Activated T-helper 1 cell treated with anti-CD3 and anti-CD28 coated beads, Interleukin-12 subunit alpha, Interleukin-12 subunit beta, Interleukin-2, Interleukin-4 antibody, amounts not matched to agents 30 ng/mL and 10 ng/mL and 1 ng/mL, durations not matched to agents 14 hours and 24 hours and 36 hours (primary cell): ENCODE measurements at regions of chr6 and their contacts with region 1.

Region 1: GRCh38 chr6:111837641-111838500 is 35.4 kb downstream of the FYN start:
- DNase-seq: peak; percentile 60
- H3K4me3 Mint-ChIP-seq: peak overlapping the region; percentile 70
- H3K27ac Mint-ChIP-seq: peak overlapping the region; percentile 94
- H3K4me1 Mint-ChIP-seq: peaks cover 61% of the 10 kb centered on the region
- H3K27me3 Mint-ChIP-seq: no peaks in the 10 kb centered on the region

Region 2: DNA sequence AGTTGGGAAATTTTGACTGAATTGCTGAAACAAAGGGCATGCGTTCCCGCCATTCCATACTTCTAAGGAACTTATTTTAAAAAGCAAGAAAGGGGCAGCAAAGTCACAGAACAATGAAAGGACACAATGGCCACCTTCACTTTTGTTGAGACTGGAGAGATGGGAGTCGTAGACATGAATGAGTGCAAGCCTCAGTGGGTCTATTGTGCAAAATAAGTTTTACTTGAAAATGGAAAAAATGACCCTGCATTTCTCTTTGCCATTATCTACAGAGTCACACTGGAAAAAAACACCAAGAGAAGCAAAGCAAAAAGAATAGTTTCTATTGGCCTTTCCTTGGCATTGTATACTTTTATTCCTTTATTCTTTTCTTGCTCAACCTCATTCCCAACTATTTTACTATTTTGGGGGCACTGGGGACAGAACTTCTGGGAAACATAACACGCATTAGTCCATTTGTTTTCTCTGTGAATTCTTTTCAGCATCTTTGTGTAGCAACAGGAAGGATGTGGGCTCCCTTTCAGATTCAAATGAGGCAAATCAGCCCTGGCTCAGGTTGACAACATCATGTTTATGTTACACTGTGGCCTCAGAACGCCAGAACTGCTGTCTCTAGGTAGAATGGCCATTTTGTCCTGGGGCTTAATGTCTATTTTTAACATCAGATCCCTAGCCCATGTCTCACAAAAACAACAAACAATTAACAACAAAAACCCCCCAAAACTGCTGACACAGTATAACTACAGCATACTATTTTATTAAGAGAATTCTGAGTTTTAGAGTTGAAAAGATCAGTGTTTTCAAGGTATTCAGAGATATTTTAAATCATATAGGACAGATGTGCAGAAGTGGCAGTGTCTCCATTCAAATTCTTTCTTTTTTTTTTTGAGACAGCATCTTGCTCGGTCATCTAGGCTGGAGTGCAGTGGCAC is 86.9 kb before region 1 on chr6:
- intact Hi-C with region 1: loop called (anchors 1 kb)
- DNase-seq: peak; percentile 66
- H3K4me3 Mint-ChIP-seq: peak overlapping the region; percentile 70
- H3K27ac Mint-ChIP-seq: peak overlapping the region; percentile 97
- H3K4me1 Mint-ChIP-seq: peaks cover 95% of the 10 kb centered on the region
- H3K27me3 Mint-ChIP-seq: no peaks in the 10 kb centered on the region

Region 3: DNA sequence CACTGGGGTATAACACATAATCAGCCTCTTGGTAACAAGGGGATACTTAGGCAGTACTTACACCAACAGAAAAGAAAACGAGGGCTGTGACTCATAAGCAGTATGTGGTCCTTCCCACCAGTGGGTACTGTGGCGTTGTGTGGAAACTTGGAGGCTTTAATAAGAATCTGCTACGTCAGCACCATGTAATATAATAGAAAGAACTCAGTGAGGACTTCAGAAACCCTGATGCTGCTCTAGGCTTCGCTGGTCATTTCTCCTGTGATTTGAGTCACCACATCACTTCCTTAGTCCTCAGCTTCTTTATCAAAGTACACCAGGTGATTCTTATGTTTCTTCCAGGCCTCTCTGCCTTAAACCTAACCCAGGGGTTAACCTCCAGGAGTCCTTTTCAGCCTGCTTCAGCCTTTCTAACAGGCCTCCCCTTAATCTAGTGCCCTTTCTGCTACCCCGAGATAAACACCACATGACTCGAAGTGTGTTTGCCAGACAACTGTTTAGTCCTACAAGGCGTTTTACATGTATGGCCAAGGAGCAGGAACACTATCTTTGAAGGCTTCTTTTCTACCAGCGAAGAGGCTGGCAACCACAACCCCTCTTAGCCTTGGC is 33.1 kb before region 1 on chr6:
- intact Hi-C with region 1: loop called (anchors 1 kb)
- DNase-seq: peak; percentile 67
- H3K4me3 Mint-ChIP-seq: peak overlapping the region; percentile 74
- H3K27ac Mint-ChIP-seq: peak overlapping the region; percentile 98
- H3K4me1 Mint-ChIP-seq: peaks cover 84% of the 10 kb centered on the region
- H3K27me3 Mint-ChIP-seq: no peaks in the 10 kb centered on the region

Region 4: DNA sequence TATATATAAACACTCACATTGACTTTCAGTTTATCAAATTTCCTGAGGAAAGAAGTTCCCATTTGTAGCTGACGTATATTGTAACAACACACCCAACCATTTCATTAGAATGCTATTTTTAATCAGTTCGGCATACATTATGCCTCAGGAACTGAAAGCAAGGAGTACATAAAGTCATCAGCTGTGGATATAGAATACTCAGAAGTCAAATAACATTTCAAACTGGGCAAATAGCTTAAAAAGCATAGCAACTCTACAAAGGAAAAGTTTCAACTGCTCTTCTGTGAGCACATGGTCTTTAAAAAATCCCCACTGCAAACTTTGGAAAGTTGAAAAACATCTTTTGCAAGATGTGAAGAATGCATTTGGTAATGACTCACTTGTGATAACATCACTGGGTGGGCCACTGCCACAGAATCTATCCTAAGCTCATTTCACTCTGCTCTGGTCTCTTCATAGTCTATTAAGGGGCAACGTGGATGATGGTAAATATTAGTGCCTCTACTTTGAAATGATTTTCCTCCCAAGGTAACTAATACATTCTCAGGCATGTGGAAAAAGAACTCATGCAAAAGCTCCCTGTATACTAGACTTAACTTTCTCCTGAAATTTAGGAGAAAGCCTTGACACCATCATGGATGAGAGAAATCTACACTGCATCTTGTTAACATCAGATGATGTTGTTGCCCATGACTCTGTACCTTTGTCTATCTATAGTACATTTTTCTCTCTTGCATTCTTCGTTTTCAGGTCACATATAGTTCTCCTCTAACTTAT is 13.9 kb before region 1 on chr6:
- intact Hi-C with region 1: loop called (anchors 1 kb)
- DNase-seq: no peak
- H3K4me3 Mint-ChIP-seq: peak overlapping the region; percentile 72
- H3K27ac Mint-ChIP-seq: peak overlapping the region; percentile 89
- H3K4me1 Mint-ChIP-seq: peaks cover 81% of the 10 kb centered on the region
- H3K27me3 Mint-ChIP-seq: no peaks in the 10 kb centered on the region

Region 5: GRCh38 chr6:111854683-111855082 is 16.8 kb after region 1 on chr6:
- intact Hi-C with region 1: no loop called
- DNase-seq: no peak
- H3K4me3 Mint-ChIP-seq: no peak overlapping the region
- H3K27ac Mint-ChIP-seq: no peak overlapping the region
- H3K4me1 Mint-ChIP-seq: peaks cover 87% of the 10 kb centered on the region
- H3K27me3 Mint-ChIP-seq: no peaks in the 10 kb centered on the region

Region 6: DNA sequence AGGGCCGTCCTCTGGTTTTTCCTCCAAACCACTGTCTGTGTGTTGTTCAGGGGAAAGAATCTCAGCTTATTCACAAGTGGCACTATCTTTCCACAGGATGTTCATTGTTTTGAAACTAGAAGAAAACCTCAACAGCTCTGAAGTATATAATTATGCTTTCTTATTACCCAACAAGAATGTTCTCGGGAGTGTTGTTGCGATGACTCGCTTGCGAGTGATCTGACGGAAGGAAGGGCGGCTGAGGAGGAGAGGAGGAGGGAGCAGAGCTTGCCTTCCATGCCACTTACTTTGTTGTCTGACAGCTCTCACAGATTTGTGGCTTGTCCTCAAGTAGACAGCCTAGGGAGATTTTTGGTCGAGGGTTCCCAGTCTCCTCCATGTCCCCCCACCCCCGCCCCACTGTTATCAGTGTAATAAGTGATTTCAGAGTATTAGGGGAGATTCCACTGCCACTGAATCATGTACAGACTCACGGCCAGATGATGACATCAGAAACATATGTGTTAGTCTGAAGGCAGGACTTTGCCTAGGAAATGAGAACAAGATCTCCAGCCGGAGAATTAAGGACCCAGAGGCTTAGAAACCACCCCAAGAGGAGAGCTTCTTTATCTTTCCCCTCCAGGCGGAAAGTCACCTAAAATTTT is 135.4 kb after region 1 on chr6:
- intact Hi-C with region 1: loop called (anchors 2 kb)
- DNase-seq: peak; percentile 47
- H3K4me3 Mint-ChIP-seq: peak overlapping the region; percentile 53
- H3K27ac Mint-ChIP-seq: peak overlapping the region; percentile 87
- H3K4me1 Mint-ChIP-seq: peaks cover 55% of the 10 kb centered on the region
- H3K27me3 Mint-ChIP-seq: no peaks in the 10 kb centered on the region

Region 7: DNA sequence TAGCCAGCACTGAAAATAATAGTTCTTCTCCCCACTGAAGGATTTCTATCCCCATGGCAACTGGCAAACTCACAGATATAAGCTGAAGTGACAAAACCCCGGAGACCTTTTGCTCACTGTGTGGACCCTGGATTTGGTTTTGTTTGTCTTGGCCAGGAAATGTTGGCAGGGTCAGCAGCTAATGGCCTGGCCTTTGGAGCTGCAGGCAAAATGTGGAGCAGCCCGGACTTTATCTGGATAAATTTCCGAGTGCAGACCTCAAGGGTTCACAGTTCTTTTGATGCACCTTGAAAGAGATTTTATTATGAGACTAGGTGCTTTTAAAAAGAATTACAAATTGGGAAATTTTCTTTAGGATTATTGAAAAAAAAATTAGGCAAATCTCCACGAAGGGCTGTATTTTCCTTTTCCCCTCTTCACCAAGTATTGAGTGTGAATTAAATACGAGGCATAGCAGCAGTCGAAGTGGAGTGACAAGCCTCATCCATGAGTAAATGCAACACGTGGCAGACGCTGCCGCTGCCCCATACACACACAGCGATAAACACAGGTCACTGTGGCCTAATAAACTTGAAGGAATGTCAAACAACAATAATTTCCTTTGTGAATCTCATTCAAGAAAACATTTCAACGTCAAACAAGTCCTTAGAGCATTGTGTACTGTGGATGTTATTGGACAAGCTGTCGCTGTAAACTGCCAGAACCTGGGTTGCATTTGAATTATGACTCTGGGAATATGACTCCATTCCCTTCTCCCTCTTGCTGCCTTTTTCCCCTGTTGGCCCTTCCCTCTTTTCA is 180.9 kb after region 1 on chr6:
- intact Hi-C with region 1: loop called (anchors 1 kb)
- DNase-seq: no peak
- H3K4me3 Mint-ChIP-seq: no peak overlapping the region
- H3K27ac Mint-ChIP-seq: no peak overlapping the region
- H3K4me1 Mint-ChIP-seq: peaks cover 50% of the 10 kb centered on the region
- H3K27me3 Mint-ChIP-seq: no peaks in the 10 kb centered on the region